Heart right ventricle (tissue), 16 donors: ENCODE measurements at regions of chr2 and their contacts with region 1.

Region 1: DNA sequence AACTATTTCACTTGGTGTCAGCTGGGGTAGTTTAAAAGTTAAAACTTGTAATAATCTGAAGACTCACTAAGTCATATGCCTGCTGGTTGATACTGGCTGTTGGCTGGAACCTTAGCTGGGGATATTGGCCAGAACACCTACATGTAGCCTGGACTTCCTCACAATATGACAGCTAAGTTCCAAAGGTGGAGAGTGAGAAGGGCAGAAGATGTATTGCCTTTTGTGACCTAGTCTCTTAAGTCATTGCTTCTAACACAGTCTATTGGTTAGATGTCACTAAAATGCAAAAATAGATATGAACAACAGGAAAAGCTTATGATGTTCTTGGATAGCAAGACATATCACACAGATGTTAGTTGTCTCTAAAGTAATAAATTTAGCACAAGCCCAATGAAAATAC is 113.2 kb upstream of the CHAC2 start:
- DNase-seq: no peak
- ATAC-seq: peak in 1 of 8 donors; percentile 27
- H3K4me3 ChIP-seq: no peak overlapping the region
- H3K27ac ChIP-seq: no peak overlapping the region
- H3K4me1 ChIP-seq: peaks cover 0 to 9% (median 0%) of the 10 kb centered on the region in 9 donors
- H3K27me3 ChIP-seq: no peaks in the 10 kb centered on the region
- CTCF ChIP-seq: no peak

Region 2: GRCh38 chr2:52862801-52863200 is 791.6 kb before region 1 on chr2:
- intact Hi-C with region 1: loop called in 1 of 10 experiments (anchors 5 kb)
- DNase-seq: no peak
- ATAC-seq: no peak
- H3K4me3 ChIP-seq: no peak overlapping the region
- H3K27ac ChIP-seq: no peak overlapping the region
- H3K4me1 ChIP-seq: peaks cover 0 to 11% (median 0%) of the 10 kb centered on the region in 9 donors
- H3K27me3 ChIP-seq: no peaks in the 10 kb centered on the region
- CTCF ChIP-seq: no peak

Region 3: GRCh38 chr2:53622141-53622540 is 32.3 kb before region 1 on chr2:
- intact Hi-C with region 1: no loop called
- DNase-seq: no peak
- ATAC-seq: no peak
- H3K4me3 ChIP-seq: no peak overlapping the region
- H3K27ac ChIP-seq: no peak overlapping the region
- H3K4me1 ChIP-seq: no peaks in the 10 kb centered on the region
- H3K27me3 ChIP-seq: no peaks in the 10 kb centered on the region
- CTCF ChIP-seq: no peak